Activated naive CD4-positive, alpha-beta T cell treated with anti-CD3 and anti-CD28 coated beads for 36 hours (primary cell): ENCODE measurements at regions of chr1 and their contacts with region 1.

Region 1: DNA sequence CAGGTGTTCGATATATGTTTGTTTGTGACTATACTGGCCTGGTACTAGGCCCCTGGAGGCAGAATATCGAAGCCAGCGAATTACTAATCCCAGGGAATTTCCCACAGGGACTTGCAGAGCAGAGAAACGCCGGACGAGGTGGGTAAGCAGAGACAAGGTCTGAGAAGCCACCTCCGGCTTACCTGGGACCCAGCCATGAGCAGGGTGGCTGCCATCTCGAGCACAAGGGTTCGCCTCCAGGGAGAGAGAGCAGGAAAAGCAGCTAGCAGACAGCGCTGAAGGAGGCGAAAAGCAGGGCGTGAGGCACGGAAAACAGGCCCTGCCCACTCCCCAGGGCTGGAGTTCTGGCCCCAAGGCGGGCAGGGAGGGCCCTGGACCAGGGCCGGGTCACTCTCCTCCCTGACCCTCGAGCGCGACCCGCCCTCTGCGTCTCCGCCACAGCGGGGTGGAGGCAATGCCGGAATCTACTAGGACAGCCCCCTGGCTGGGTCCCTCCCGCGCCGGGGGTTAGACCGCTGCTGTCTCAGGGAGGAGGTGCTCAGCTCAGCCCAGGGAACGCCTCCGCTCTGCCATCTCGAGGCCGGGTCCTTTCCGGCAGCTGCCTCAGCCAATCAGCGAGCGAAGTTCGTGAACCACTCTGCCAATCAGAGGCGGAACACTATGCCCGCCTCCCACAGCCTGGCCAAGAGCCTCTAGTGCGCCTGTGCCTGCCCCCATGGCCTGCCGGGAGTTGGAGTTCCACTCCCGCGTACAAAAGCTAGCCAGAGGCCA is 1.7 kb downstream of the ZNF436 start:
- DNase-seq: peak; percentile 99
- H3K4me3 Mint-ChIP-seq: peak overlapping the region; percentile 97
- H3K27ac Mint-ChIP-seq: peak overlapping the region; percentile 98
- H3K4me1 Mint-ChIP-seq: peaks cover 22% of the 10 kb centered on the region
- H3K27me3 Mint-ChIP-seq: no peaks in the 10 kb centered on the region

Region 2: GRCh38 chr1:23019094-23019862 is 348.7 kb before region 1 on chr1 and contains the start of gene KDM1A:
- CTCF ChIA-PET with region 1: no interaction called
- intact Hi-C with region 1: loop called (anchors 1 kb)
- DNase-seq: peak; percentile 97
- H3K4me3 Mint-ChIP-seq: peak within 1 kb of the TSS; percentile 93
- H3K27ac Mint-ChIP-seq: peak within 1 kb of the TSS; percentile 83
- H3K4me1 Mint-ChIP-seq: peaks cover 42% of the 10 kb centered on the region
- H3K27me3 Mint-ChIP-seq: no peaks in the 10 kb centered on the region
- total RNA-seq, gene KDM1A: 59.7 to 62.6 TPM

Region 3: GRCh38 chr1:23344111-23344986 is 23.6 kb before region 1 on chr1 and contains the start of gene HNRNPR:
- CTCF ChIA-PET with region 1: interaction called, 5 read pairs
- intact Hi-C with region 1: loop called (anchors 1 kb)
- DNase-seq: peak; percentile 100
- H3K4me3 Mint-ChIP-seq: peak within 1 kb of the TSS; percentile 83
- H3K27ac Mint-ChIP-seq: peak within 1 kb of the TSS; percentile 93
- H3K4me1 Mint-ChIP-seq: peaks cover 32% of the 10 kb centered on the region
- H3K27me3 Mint-ChIP-seq: no peaks in the 10 kb centered on the region
- total RNA-seq, gene HNRNPR: 203 to 208 TPM

Region 4: DNA sequence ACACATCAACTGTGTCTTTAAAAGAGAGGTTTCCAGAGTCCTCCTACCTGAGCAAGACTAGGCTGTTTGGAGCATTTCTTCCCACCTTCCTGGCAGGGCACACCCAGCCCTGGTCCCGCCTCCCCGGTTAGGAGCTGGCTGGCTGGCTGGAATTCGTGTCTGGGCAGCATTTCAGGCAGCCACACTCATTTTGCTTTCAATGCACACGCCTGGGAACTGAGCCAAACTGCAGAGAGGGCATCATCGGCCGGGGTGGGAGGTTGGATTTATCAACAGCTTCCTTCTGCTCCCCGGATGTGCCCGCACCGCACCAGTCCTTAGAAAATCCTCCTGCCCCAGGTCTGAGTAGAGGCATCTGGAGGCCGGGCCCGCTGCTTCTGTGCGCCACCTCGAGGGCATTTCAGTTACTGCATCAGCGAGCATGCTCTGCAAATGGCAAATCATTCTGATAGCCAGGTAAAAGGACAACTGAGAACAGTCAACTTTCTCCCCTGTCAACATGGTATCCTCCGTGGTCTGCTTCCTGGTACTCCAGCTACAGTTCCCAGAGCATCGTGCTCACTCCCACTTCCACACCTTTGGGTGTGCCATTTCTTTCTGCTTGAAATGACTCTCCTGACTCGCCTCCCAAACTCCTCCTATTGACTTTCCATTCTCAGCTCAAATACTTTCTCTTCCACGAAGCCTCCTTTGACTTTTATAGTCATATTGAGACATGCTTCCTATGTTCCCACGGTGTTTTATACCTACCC is 35.9 kb after region 1 on chr1:
- CTCF ChIA-PET with region 1: interaction called, 8 read pairs
- intact Hi-C with region 1: loop called (anchors 1 kb)
- DNase-seq: peak; percentile 94
- H3K4me3 Mint-ChIP-seq: no peak overlapping the region
- H3K27ac Mint-ChIP-seq: no peak overlapping the region
- H3K4me1 Mint-ChIP-seq: peaks cover 11% of the 10 kb centered on the region
- H3K27me3 Mint-ChIP-seq: no peaks in the 10 kb centered on the region

Region 5: GRCh38 chr1:23422241-23423030 is 54.5 kb after region 1 on chr1:
- CTCF ChIA-PET with region 1: no interaction called
- intact Hi-C with region 1: loop called (anchors 1 kb)
- DNase-seq: peak; percentile 75
- H3K4me3 Mint-ChIP-seq: peak overlapping the region; percentile 85
- H3K27ac Mint-ChIP-seq: peak overlapping the region; percentile 2
- H3K4me1 Mint-ChIP-seq: peaks cover 21% of the 10 kb centered on the region
- H3K27me3 Mint-ChIP-seq: no peaks in the 10 kb centered on the region

Region 6: GRCh38 chr1:23484253-23485001 is 116.5 kb after region 1 on chr1:
- CTCF ChIA-PET with region 1: no interaction called
- intact Hi-C with region 1: loop called (anchors 1 kb)
- DNase-seq: peak; percentile 93
- H3K4me3 Mint-ChIP-seq: peak overlapping the region; percentile 83
- H3K27ac Mint-ChIP-seq: no peak overlapping the region
- H3K4me1 Mint-ChIP-seq: peaks cover 12% of the 10 kb centered on the region
- H3K27me3 Mint-ChIP-seq: peaks cover 15% of the 10 kb centered on the region

Region 7: DNA sequence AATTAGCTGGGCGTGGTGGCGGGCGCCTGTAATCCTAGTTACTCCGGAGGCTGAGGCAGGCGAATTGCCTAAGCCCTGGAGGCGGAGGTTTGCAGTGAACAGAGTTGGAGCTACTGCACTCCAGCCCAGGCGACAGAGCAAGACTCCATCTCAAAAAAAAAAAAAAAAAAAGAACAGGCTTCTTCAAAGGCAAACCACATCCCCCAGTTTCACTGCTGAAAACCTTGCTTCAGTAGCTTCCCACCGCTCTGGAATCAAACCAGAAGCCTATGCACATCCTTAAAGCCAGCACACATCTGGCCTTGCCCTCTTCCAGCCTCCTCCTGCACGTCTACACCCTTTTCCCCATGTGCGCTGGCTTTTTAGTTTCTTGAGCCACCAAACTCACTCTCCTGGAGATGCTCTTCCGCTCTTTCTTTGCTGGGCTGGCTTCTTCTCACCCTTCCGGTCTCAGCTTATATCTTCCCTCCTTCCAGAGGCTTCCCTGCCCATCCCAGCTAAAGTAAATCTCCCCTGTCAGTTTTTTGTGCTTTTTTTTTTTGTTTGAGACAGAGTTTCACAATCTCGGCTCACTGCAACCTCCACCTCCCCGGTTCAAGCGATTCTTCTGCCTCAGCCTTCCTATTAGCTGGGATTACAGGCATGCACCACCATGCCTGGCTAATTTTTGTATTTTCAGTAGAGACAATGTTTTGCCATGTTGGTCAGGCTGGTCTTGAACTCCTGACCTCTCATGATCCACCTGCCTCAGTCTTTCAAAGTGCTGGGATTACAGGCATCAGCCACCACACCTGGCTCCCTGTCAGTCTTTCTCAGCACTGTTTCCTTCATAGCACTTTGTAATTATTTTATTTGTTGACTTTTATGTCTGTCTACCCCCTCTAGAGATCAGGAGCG is 233.3 kb after region 1 on chr1:
- CTCF ChIA-PET with region 1: no interaction called
- intact Hi-C with region 1: no loop called
- DNase-seq: no peak
- H3K4me3 Mint-ChIP-seq: peak overlapping the region; percentile 69
- H3K27ac Mint-ChIP-seq: peak overlapping the region; percentile 85
- H3K4me1 Mint-ChIP-seq: peaks cover 71% of the 10 kb centered on the region
- H3K27me3 Mint-ChIP-seq: no peaks in the 10 kb centered on the region

Region 8: GRCh38 chr1:23743287-23744052 is 375.5 kb after region 1 on chr1 and contains the start of gene ELOA:
- CTCF ChIA-PET with region 1: no interaction called
- intact Hi-C with region 1: loop called (anchors 10 kb)
- DNase-seq: peak; percentile 79
- H3K4me3 Mint-ChIP-seq: peak within 1 kb of the TSS; percentile 88
- H3K27ac Mint-ChIP-seq: peak within 1 kb of the TSS; percentile 85
- H3K4me1 Mint-ChIP-seq: peaks cover 42% of the 10 kb centered on the region
- H3K27me3 Mint-ChIP-seq: no peaks in the 10 kb centered on the region
- total RNA-seq, gene ELOA: 21.8 to 22.6 TPM